Natural killer cell (primary cell): ENCODE measurements at regions of chr10 and their contacts with region 1.

Region 1: DNA sequence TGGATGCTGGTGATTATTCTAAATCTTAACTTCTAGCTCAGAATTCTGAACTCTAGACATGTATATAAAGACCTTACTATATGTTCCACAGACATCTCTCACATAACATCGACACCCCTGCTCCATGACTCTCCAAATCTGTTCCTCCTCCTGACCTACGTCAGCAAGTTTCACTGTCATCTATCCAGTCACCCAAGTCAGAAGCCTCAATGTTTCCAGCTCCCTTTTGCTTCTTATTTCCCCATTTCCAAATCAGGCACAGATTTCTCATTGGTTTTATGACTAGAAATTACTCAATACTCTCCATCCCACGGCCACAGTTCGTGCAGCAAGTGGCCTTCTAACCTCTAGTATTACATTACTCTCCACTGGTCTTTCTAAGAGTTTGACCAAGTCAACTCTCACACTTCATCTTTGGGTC is 28.5 kb downstream of the EPC1 start:
- DNase-seq: peak in 1 of 2 donors; percentile 41
- ATAC-seq: peak; percentile 38 to 43 (median 41)
- H3K4me3 ChIP-seq: no peak overlapping the region
- H3K4me3 Mint-ChIP-seq: peak overlapping the region; percentile 39
- H3K27ac ChIP-seq: peak overlapping the region; percentile 64
- H3K27ac Mint-ChIP-seq: peak overlapping the region; percentile 77 to 84
- H3K4me1 ChIP-seq: peaks cover 21% of the 10 kb centered on the region
- H3K4me1 Mint-ChIP-seq: peaks cover 78 to 81% of the 10 kb centered on the region in 2 donors
- H3K27me3 ChIP-seq: no peaks in the 10 kb centered on the region
- H3K27me3 Mint-ChIP-seq: no peaks in the 10 kb centered on the region
- CTCF ChIP-seq: no peak

Region 2: DNA sequence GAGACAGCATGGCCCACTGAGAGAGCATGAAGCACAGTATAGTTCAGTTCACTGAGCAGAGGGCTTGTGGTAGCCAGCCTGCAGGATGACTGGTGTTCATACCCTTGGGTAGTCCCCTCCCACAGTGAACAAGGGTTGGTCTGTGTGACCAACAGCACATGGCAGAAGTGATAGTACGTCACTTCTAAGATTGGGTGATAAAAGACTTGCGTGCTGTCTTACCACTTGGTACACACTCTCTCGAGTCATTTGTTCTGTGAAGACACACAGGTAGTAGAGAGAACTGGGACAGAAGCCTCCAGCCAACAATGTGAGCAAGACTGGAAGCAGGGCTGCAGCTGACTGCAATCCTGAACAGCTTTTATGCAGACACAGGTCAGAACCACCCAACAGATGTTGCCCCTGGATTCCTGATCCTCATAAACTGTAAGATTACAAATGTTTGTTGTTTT is 13.8 kb after region 1 on chr10:
- intact Hi-C with region 1: loop called (anchors 2 kb)
- DNase-seq: peak; percentile 67 to 90
- ATAC-seq: peak; percentile 95 to 98 (median 96)
- H3K4me3 ChIP-seq: no peak overlapping the region
- H3K4me3 Mint-ChIP-seq: peak overlapping the region; percentile 62
- H3K27ac ChIP-seq: peak overlapping the region; percentile 75
- H3K27ac Mint-ChIP-seq: peak overlapping the region; percentile 67 to 93
- H3K4me1 ChIP-seq: peaks cover 40% of the 10 kb centered on the region
- H3K4me1 Mint-ChIP-seq: peaks cover 82 to 95% of the 10 kb centered on the region in 2 donors
- H3K27me3 ChIP-seq: no peaks in the 10 kb centered on the region
- H3K27me3 Mint-ChIP-seq: no peaks in the 10 kb centered on the region
- CTCF ChIP-seq: no peak

Region 3: DNA sequence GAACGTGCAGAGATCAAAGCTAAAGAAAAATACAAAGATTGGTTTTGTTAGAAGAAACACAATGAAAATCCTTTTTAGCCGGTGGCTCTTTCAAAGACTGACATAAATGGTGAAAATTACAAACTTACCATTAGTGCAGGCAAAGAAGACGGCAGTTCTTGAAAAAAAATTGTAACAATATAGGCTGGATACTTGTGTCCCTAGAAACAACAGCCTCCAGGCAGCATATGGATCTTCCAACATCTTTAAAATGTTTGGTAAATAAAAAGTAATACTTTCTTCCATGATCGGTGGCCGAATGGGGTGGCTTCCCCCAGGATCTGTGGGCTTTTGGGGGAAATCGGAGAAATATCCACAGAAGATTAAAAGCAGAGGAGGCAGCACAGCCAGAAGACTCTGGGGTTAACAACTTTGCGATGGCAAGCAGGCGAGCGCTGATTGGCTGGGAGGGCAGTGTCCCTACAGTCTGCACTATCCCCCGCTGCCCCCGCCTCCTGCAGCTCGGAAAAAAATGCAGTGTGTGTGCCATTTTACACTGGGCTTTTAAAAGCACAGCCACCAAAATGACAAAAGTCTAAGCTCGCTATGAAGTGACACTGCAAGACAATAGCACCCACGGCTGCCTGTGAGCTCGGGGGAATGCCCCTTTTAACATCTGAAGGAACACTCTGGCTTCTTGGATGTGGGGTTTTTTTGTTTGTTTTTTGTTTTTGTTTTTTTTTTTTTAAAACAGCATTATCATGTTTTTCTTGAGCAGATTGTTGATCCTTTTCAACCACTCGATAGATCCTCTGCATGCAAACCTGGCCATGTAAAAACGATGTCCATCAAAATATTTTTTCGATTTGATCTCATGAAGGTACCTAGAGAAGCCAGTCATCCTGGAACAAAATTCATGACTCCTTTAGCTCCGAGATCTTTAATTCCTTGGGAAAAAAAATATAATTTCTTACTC is 60.2 kb after region 1 on chr10:
- intact Hi-C with region 1: no loop called
- DNase-seq: peak; percentile 87 to 95
- ATAC-seq: peak; percentile 90 to 98 (median 95)
- H3K4me3 ChIP-seq: peak overlapping the region; percentile 97
- H3K4me3 Mint-ChIP-seq: no peak overlapping the region
- H3K27ac ChIP-seq: peak overlapping the region; percentile 82
- H3K27ac Mint-ChIP-seq: no peak overlapping the region
- H3K4me1 ChIP-seq: peaks cover 3% of the 10 kb centered on the region
- H3K4me1 Mint-ChIP-seq: peaks cover 27 to 32% of the 10 kb centered on the region in 2 donors
- H3K27me3 ChIP-seq: no peaks in the 10 kb centered on the region
- H3K27me3 Mint-ChIP-seq: no peaks in the 10 kb centered on the region
- CTCF ChIP-seq: no peak